ENCODE measurements at regions of chr5 and their contacts with region 1.

Region 1: GRCh38 chr5:41835645-41836044 is 34.6 kb downstream of the OXCT1 start:
- DNase-seq: peak; percentile 81
- ATAC-seq: peak; percentile 99
- H3K4me3 ChIP-seq: no peak overlapping the region
- H3K27ac ChIP-seq: no peak overlapping the region
- H3K4me1 ChIP-seq: peaks cover 15% of the 10 kb centered on the region
- H3K27me3 ChIP-seq: no peaks in the 10 kb centered on the region
- CTCF ChIP-seq: no peak

Region 2: DNA sequence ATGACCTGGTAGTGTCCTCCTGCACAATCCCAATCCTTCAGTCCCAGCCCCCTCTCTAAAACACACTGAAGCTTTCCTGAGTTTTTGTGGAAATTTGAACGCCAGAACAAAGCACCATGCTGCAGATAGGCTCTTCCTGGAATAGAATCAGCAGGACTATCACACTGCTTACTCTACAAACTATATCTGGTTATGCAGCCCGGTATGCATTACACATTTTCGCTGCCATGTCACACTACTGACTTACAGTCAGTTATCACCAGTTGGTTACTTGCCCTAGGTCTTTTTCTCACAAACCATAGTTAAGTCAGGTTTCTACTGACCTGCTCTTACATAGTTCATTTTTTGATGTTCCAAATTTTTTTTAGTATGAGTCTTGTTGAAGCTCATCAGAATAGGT is 350.1 kb before region 1 on chr5:
- CTCF ChIA-PET with region 1: no interaction called
- POLR2A ChIA-PET with region 1: no interaction called
- intact Hi-C with region 1: no loop called
- DNase-seq: no peak
- ATAC-seq: no peak
- H3K4me3 ChIP-seq: no peak overlapping the region
- H3K27ac ChIP-seq: no peak overlapping the region
- H3K4me1 ChIP-seq: no peaks in the 10 kb centered on the region
- H3K27me3 ChIP-seq: no peaks in the 10 kb centered on the region
- CTCF ChIP-seq: no peak

Region 3: DNA sequence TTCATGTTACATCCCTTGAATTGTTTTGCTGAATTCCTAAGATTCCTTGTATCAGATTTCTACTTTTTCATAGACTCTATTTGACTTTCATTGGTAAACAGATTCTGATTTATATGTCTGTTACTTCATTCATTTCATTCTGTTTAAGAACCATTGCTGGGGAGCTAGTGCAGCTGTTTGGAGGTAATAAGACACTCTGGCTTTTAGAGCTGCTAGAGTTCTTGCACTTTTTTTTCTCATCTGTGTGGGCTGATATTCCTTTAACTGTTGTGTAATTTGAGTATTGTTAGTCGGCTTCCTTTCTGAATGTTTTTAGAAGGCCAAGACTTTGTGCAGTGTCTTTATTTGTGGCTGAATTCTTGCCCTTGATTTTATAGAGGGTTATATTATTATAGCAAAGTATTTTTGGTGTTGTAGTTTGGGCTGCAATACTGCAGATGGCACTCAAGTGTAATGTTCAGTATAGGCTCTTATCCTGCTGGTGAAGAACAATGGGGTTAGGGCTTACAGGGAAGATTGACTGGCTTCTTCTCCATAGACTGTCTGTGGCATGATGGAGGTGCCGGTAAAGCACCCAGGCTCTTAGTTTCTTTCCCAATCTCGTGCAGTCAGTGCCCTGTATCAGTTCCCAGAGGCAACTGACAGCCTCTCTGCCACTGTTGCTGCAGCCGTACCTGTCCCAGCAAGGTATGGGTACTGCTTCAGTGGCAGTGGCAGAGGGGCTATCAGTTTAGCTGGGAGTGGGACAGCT is 127.6 kb before region 1 on chr5:
- CTCF ChIA-PET with region 1: no interaction called
- POLR2A ChIA-PET with region 1: no interaction called
- intact Hi-C with region 1: loop called (anchors 2 kb)
- DNase-seq: peak; percentile 80
- ATAC-seq: peak; percentile 97
- H3K4me3 ChIP-seq: no peak overlapping the region
- H3K27ac ChIP-seq: no peak overlapping the region
- H3K4me1 ChIP-seq: no peaks in the 10 kb centered on the region
- H3K27me3 ChIP-seq: no peaks in the 10 kb centered on the region
- CTCF ChIP-seq: peak; percentile 90

Region 4: GRCh38 chr5:41761663-41762062 is 74.0 kb before region 1 on chr5:
- CTCF ChIA-PET with region 1: no interaction called
- POLR2A ChIA-PET with region 1: no interaction called
- intact Hi-C with region 1: loop called (anchors 1 kb)
- DNase-seq: no peak
- ATAC-seq: peak; percentile 67
- H3K4me3 ChIP-seq: no peak overlapping the region
- H3K27ac ChIP-seq: no peak overlapping the region
- H3K4me1 ChIP-seq: 0 out of 2 replicates have a peak, but pooled peaks cover 5% of the 10 kb centered on the region
- H3K27me3 ChIP-seq: no peaks in the 10 kb centered on the region
- CTCF ChIP-seq: no peak

Region 5: DNA sequence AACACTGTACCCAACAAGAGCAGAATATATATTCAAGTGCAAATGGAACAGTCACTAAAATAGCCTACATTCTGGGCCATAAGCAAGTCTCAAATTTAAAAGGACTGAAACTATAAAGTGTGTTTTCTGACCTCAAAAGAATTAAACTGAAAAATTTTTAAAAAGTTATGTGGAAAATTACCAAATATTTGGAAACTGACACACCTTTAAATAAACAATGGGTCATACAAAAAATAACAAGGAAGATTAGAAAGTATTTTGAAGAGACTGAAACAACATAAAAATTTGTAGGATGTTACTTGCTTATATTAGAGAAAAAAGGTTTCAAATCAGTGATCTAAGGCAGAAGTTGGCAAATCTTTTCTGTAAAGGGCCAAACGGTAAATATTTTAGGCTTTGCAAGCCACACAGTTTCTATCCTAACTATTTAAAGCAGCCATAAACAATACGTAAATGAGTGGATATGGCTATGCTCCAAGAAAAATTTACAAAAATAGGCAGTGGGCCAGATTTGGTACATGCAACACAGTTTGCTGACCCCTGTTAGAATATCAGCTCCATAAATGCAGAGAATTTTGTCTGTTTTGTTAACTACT is 46.7 kb before region 1 on chr5:
- CTCF ChIA-PET with region 1: interaction called, 4 read pairs
- POLR2A ChIA-PET with region 1: no interaction called
- intact Hi-C with region 1: loop called (anchors 2 kb)
- DNase-seq: peak; percentile 82
- ATAC-seq: peak; percentile 64
- H3K4me3 ChIP-seq: peak overlapping the region; percentile 44
- H3K27ac ChIP-seq: peak overlapping the region; percentile 77
- H3K4me1 ChIP-seq: peaks cover 57% of the 10 kb centered on the region
- H3K27me3 ChIP-seq: no peaks in the 10 kb centered on the region
- CTCF ChIP-seq: no peak